ENCODE measurements at regions of chr3 and their contacts with region 1.

Region 1: DNA sequence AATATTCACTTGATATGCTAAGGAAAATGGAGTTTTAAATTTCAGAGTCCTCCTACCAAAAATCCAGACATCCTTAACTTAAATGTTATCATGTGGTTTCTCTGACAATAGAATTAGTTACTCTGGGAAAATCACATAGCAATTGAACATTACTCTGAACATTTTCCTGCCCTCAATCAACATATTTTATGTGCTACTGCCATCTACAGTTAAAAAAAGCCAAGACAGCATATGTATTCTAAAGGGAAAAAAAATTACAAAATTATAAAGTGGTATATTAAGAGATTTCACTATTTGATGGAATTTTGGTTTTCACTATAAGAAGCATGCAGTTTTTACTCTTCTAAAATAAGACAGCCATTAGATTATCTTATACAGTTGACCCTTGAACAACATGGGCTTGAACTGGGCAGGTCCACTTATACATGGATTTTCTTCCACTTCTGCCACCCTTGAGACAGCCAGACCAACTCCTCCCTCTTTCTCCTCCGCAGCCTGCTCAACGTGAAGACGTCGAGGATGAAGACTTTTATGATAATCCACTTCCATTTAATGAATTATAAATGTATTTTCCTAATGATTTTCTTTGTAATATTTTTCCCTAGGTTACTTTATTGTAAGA is 122.3 kb downstream of the ATP1B3 start:
- DNase-seq: peak; percentile 35
- ATAC-seq: 0 out of 2 replicates have a peak, but pooled peaks have one; percentile 49
- H3K4me3 ChIP-seq: no peak overlapping the region
- H3K27ac ChIP-seq: no peak overlapping the region
- H3K4me1 ChIP-seq: peaks cover 4% of the 10 kb centered on the region
- H3K27me3 ChIP-seq: no peaks in the 10 kb centered on the region
- CTCF ChIP-seq: peak; percentile 61
- POLR2A ChIP-seq: no peak
- RAD21 ChIP-seq: peak; percentile 52

Region 2: GRCh38 chr3:141460097-141460704 is 538.6 kb before region 1 on chr3:
- CTCF ChIA-PET with region 1: no interaction called
- POLR2A ChIA-PET with region 1: no interaction called
- dilution Hi-C with region 1: no loop called
- in situ Hi-C with region 1: no loop called
- intact Hi-C with region 1: loop called (anchors 5 kb)
- DNase-seq: peak; percentile 85
- ATAC-seq: peak; percentile 91
- H3K4me3 ChIP-seq: no peak overlapping the region
- H3K27ac ChIP-seq: no peak overlapping the region
- H3K4me1 ChIP-seq: peaks cover 12% of the 10 kb centered on the region
- H3K27me3 ChIP-seq: no peaks in the 10 kb centered on the region
- CTCF ChIP-seq: peak; percentile 98
- POLR2A ChIP-seq: no peak
- RAD21 ChIP-seq: peak; percentile 97

Region 3: GRCh38 chr3:141575879-141576743 is 422.7 kb before region 1 on chr3:
- CTCF ChIA-PET with region 1: no interaction called
- POLR2A ChIA-PET with region 1: no interaction called
- dilution Hi-C with region 1: no loop called
- in situ Hi-C with region 1: loop called (anchors 25 kb)
- intact Hi-C with region 1: loop called (anchors 2 kb)
- DNase-seq: peak; percentile 40
- ATAC-seq: peak; percentile 79
- H3K4me3 ChIP-seq: no peak overlapping the region
- H3K27ac ChIP-seq: no peak overlapping the region
- H3K4me1 ChIP-seq: peaks cover 2% of the 10 kb centered on the region; the same call in 1 of the 2 replicates
- H3K27me3 ChIP-seq: no peaks in the 10 kb centered on the region
- CTCF ChIP-seq: peak; percentile 55
- POLR2A ChIP-seq: no peak
- RAD21 ChIP-seq: peak; percentile 56

Region 4: GRCh38 chr3:141875374-141875892 is 123.3 kb before region 1 on chr3:
- CTCF ChIA-PET with region 1: interaction called, 3 read pairs
- POLR2A ChIA-PET with region 1: no interaction called
- dilution Hi-C with region 1: no loop called
- in situ Hi-C with region 1: no loop called
- intact Hi-C with region 1: loop called (anchors 5 kb)
- DNase-seq: peak; percentile 74
- ATAC-seq: peak; percentile 74
- H3K4me3 ChIP-seq: peak overlapping the region; percentile 96
- H3K27ac ChIP-seq: peak overlapping the region; percentile 87
- H3K4me1 ChIP-seq: peaks cover 2% of the 10 kb centered on the region
- H3K27me3 ChIP-seq: no peaks in the 10 kb centered on the region
- CTCF ChIP-seq: peak; percentile 88
- POLR2A ChIP-seq: no peak
- RAD21 ChIP-seq: peak; percentile 63

Region 5: GRCh38 chr3:141959921-141960554 is 38.7 kb before region 1 on chr3:
- CTCF ChIA-PET with region 1: interaction called, 3 read pairs
- POLR2A ChIA-PET with region 1: no interaction called
- dilution Hi-C with region 1: no loop called
- in situ Hi-C with region 1: no loop called
- intact Hi-C with region 1: loop called (anchors 5 kb)
- DNase-seq: peak; percentile 78
- ATAC-seq: peak; percentile 63
- H3K4me3 ChIP-seq: no peak overlapping the region
- H3K27ac ChIP-seq: peak overlapping the region; percentile 85
- H3K4me1 ChIP-seq: peaks cover 15% of the 10 kb centered on the region
- H3K27me3 ChIP-seq: no peaks in the 10 kb centered on the region
- CTCF ChIP-seq: no peak
- POLR2A ChIP-seq: no peak
- RAD21 ChIP-seq: no peak

Measured in IMR-90 (cell line).